CD8-positive, alpha-beta T cell (primary cell): ENCODE measurements at regions of chr9 and their contacts with region 1.

Region 1: GRCh38 chr9:129080602-129081387 is at the start of gene DOLPP1:
- DNase-seq: peak; percentile 97 to 99 (median 98)
- ATAC-seq: peak; percentile 92
- H3K4me3 ChIP-seq: peak within 1 kb of the TSS; percentile 79 to 85
- H3K4me3 Mint-ChIP-seq: peak within 1 kb of the TSS; percentile 89
- H3K27ac ChIP-seq: peak within 1 kb of the TSS; percentile 64 to 76
- H3K27ac Mint-ChIP-seq: peak within 1 kb of the TSS; percentile 81
- H3K4me1 ChIP-seq: peaks cover 30% of the 10 kb centered on the region
- H3K4me1 Mint-ChIP-seq: peaks cover 20% of the 10 kb centered on the region
- H3K27me3 ChIP-seq: no peaks in the 10 kb centered on the region
- H3K27me3 Mint-ChIP-seq: no peaks in the 10 kb centered on the region
- CTCF ChIP-seq: no peak
- total RNA-seq, gene DOLPP1: 4.6 to 5.1 TPM

Region 2: DNA sequence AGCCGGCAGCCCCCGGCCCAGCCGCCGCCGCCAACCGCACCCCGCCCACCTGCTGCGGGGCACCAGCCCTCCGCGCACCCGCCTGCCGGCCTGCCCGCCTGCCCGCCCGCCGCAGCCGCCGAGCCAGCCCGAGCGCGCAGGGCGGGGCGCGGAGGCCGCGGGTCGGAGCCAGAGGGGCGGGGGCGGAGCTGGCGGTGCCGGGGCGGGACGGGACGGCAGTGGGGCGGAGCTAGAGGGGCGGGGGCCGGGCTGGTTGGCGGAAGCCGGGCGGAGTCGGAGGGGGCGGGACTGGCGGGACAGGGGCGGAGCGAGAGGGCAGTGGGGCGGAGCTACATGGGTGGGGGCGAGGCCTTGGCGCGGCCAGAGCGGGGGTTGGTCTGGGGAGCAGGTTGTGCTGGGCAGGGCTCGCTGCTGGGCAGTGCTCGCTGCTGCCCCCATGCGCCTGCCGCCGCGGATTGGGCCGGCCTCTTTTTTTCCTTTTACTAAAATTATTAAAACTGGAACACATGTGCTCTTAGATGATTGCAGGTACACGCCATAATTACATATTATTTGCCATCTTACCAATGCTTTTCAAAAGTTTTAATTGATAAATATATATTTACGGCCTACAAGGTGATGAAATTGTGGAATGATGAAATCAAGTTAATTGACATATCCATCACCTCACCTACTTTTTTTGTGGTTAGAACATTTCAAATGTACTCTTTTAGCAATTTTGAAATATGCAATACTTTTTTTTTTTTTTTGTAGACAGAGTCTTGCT is 52.4 kb before region 1 on chr9 and contains the start of gene SH3GLB2:
- CTCF ChIA-PET with region 1: no interaction called
- POLR2A ChIA-PET with region 1: interaction called, 8 read pairs
- intact Hi-C with region 1: loop called (anchors 1 kb)
- DNase-seq: peak; percentile 88 to 97 (median 94)
- ATAC-seq: peak; percentile 92
- H3K4me3 ChIP-seq: peak within 1 kb of the TSS; percentile 51 to 61
- H3K4me3 Mint-ChIP-seq: peak within 1 kb of the TSS; percentile 83
- H3K27ac ChIP-seq: peak within 1 kb of the TSS; percentile 40 to 62
- H3K27ac Mint-ChIP-seq: peak within 1 kb of the TSS; percentile 64
- H3K4me1 ChIP-seq: peaks cover 13% of the 10 kb centered on the region
- H3K4me1 Mint-ChIP-seq: peaks cover 24% of the 10 kb centered on the region
- H3K27me3 ChIP-seq: no peaks in the 10 kb centered on the region
- H3K27me3 Mint-ChIP-seq: no peaks in the 10 kb centered on the region
- CTCF ChIP-seq: no peak
- total RNA-seq, gene SH3GLB2: 64.9 to 68.3 TPM

Region 3: DNA sequence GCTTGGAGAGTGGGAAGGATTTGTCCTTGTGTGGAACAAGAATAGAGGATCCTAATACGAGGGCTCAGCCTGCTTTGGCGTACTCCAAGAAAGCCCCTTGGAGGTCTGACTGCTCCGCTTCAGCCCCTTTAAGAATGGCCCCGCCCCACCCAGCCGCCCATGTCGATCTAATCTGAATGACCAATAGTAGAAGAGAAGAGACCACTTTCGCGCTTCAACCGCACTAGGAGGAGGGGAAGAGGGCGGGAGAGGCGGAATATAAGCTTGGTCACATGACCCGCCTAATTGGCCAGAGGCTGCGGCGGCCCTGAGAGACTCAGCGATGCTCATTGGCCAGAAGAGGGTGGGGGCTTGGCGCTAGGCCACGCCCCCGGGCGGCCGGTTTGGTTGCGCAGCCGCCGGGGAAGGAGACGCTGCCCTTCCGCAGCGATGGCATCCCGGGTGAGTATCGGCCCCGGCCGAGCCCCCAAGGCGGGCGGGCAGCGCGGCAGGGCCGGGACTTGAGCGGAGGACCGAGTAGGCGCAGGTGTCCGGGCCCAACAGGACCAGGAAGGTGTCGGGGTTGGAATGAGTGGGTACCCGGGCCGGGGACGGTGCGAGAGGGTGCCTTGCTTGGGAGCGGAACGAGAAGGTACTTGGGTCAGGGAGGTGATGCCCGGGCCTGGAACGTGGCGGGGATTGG is 44.4 kb before region 1 on chr9 and contains the start of gene MIGA2:
- CTCF ChIA-PET with region 1: no interaction called
- POLR2A ChIA-PET with region 1: interaction called, 6 read pairs
- intact Hi-C with region 1: loop called (anchors 1 kb)
- DNase-seq: peak; percentile 85 to 99 (median 94)
- ATAC-seq: peak; percentile 94
- H3K4me3 ChIP-seq: peak within 1 kb of the TSS; percentile 99
- H3K4me3 Mint-ChIP-seq: peak within 1 kb of the TSS; percentile 98
- H3K27ac ChIP-seq: peak within 1 kb of the TSS; percentile 68 to 83
- H3K27ac Mint-ChIP-seq: peak within 1 kb of the TSS; percentile 85
- H3K4me1 ChIP-seq: peaks cover 21% of the 10 kb centered on the region
- H3K4me1 Mint-ChIP-seq: peaks cover 36% of the 10 kb centered on the region
- H3K27me3 ChIP-seq: no peaks in the 10 kb centered on the region
- H3K27me3 Mint-ChIP-seq: no peaks in the 10 kb centered on the region
- CTCF ChIP-seq: no peak
- total RNA-seq, gene MIGA2: 63.5 to 69.0 TPM

Region 4: GRCh38 chr9:129068990-129069861 is 11.6 kb before region 1 on chr9:
- CTCF ChIA-PET with region 1: interaction called, 3 read pairs
- POLR2A ChIA-PET with region 1: interaction called, 14 read pairs
- intact Hi-C with region 1: loop called in 1 of 2 experiments (anchors 1 kb)
- DNase-seq: peak; percentile 22 to 82 (median 69)
- ATAC-seq: peak; percentile 90
- H3K4me3 ChIP-seq: peak overlapping the region; percentile 5 to 25
- H3K4me3 Mint-ChIP-seq: peak overlapping the region; percentile 68
- H3K27ac ChIP-seq: peak overlapping the region; percentile 34 to 66
- H3K27ac Mint-ChIP-seq: peak overlapping the region; percentile 92
- H3K4me1 ChIP-seq: peaks cover 45% of the 10 kb centered on the region
- H3K4me1 Mint-ChIP-seq: peaks cover 48% of the 10 kb centered on the region
- H3K27me3 ChIP-seq: no peaks in the 10 kb centered on the region
- H3K27me3 Mint-ChIP-seq: no peaks in the 10 kb centered on the region
- CTCF ChIP-seq: no peak

Region 5: GRCh38 chr9:129630967-129631672 is 550.3 kb after region 1 on chr9:
- CTCF ChIA-PET with region 1: no interaction called
- POLR2A ChIA-PET with region 1: no interaction called
- intact Hi-C with region 1: no loop called
- DNase-seq: no peak
- ATAC-seq: no peak
- H3K4me3 ChIP-seq: no peak overlapping the region
- H3K4me3 Mint-ChIP-seq: no peak overlapping the region
- H3K27ac ChIP-seq: no peak overlapping the region
- H3K27ac Mint-ChIP-seq: peak overlapping the region; percentile 82
- H3K4me1 ChIP-seq: peaks cover 33% of the 10 kb centered on the region
- H3K4me1 Mint-ChIP-seq: peaks cover 52% of the 10 kb centered on the region
- H3K27me3 ChIP-seq: no peaks in the 10 kb centered on the region
- H3K27me3 Mint-ChIP-seq: no peaks in the 10 kb centered on the region
- CTCF ChIP-seq: no peak

Region 6: DNA sequence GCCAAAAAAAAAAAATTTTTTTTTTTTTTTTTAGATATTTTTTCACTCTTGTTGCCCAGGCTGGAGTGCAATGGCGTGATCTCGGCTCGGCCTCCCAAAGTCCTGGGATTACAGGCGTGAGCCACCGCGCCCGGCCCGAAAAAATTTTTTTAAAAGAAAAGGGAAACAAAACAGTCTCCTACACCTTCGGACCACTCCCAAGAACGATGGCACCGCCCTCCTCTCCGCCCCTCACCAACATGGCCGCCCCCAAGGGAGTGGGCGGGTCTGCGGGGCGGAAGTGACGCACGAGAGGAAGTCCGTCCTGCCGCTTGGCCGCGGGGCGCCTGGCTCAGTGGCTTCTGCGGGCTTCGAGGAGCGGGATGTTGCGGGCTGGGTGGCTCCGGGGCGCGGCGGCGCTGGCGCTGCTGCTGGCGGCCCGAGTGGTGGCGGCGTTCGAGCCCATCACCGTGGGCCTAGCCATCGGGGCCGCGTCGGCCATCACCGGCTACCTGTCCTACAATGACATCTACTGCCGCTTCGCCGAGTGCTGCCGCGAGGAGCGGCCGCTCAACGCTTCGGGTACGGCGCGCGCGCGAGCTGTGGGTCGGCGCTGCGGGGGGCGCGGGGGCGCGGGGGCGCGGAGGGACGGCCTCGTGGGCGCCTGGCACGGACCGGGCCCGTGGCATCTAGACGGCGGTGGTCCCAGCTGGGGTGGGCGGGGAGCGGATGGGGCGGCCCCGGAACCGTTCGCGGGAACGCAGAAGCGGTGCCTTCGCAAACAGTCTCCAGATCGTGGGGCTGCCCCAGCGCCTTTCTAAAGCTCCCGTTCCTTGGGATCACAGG is 722.3 kb after region 1 on chr9 and contains the start of gene TOR1B:
- CTCF ChIA-PET with region 1: no interaction called
- POLR2A ChIA-PET with region 1: no interaction called
- intact Hi-C with region 1: loop called in 1 of 2 experiments (anchors 1 kb)
- DNase-seq: peak; percentile 88 to 99 (median 95)
- ATAC-seq: peak; percentile 95
- H3K4me3 ChIP-seq: peak within 1 kb of the TSS; percentile 81 to 96
- H3K4me3 Mint-ChIP-seq: peak within 1 kb of the TSS; percentile 90
- H3K27ac ChIP-seq: peak within 1 kb of the TSS; percentile 72 to 90
- H3K27ac Mint-ChIP-seq: peak within 1 kb of the TSS; percentile 94
- H3K4me1 ChIP-seq: peaks cover 20% of the 10 kb centered on the region
- H3K4me1 Mint-ChIP-seq: peaks cover 28% of the 10 kb centered on the region
- H3K27me3 ChIP-seq: no peaks in the 10 kb centered on the region
- H3K27me3 Mint-ChIP-seq: no peaks in the 10 kb centered on the region
- CTCF ChIP-seq: no peak
- total RNA-seq, gene TOR1B: 21.3 to 22.4 TPM